ENCODE measurements at regions of chr9 and their contacts with region 1.

Region 1: GRCh38 chr9:4297151-4297785 is 2.6 kb downstream of the GLIS3 start:
- DNase-seq: peak; percentile 78
- H3K4me3 ChIP-seq: peak overlapping the region; percentile 53 to 77 (median 75)
- H3K27ac ChIP-seq: peak overlapping the region; percentile 85
- H3K4me1 ChIP-seq: peaks cover 35% of the 10 kb centered on the region
- H3K27me3 ChIP-seq: no peaks in the 10 kb centered on the region
- CTCF ChIP-seq: peak in 1 of 2 donors; percentile 62
- POLR2A ChIP-seq: no peak

Region 2: GRCh38 chr9:3732077-3733038 is 564.9 kb before region 1 on chr9:
- CTCF ChIA-PET with region 1: interaction called, 4 read pairs
- POLR2A ChIA-PET with region 1: no interaction called
- dilution Hi-C with region 1: no loop called
- intact Hi-C with region 1: loop called (anchors 5 kb)
- DNase-seq: peak; percentile 88
- H3K4me3 ChIP-seq: no peak overlapping the region
- H3K27ac ChIP-seq: no peak overlapping the region
- H3K4me1 ChIP-seq: no peaks in the 10 kb centered on the region
- H3K27me3 ChIP-seq: peaks cover 0 to 2% of the 10 kb centered on the region in 2 experiments
- CTCF ChIP-seq: peak; percentile 58 to 66
- POLR2A ChIP-seq: no peak

Region 3: GRCh38 chr9:4077499-4078102 is 219.7 kb before region 1 on chr9:
- CTCF ChIA-PET with region 1: interaction called, 11 read pairs
- POLR2A ChIA-PET with region 1: no interaction called
- dilution Hi-C with region 1: no loop called
- intact Hi-C with region 1: loop called (anchors 1 kb)
- DNase-seq: peak; percentile 76
- H3K4me3 ChIP-seq: no peak overlapping the region
- H3K27ac ChIP-seq: no peak overlapping the region
- H3K4me1 ChIP-seq: peaks cover 2% of the 10 kb centered on the region
- H3K27me3 ChIP-seq: no peaks in the 10 kb centered on the region
- CTCF ChIP-seq: peak; percentile 83 to 85
- POLR2A ChIP-seq: no peak

Region 4: GRCh38 chr9:4262735-4263141 is 34.5 kb before region 1 on chr9:
- CTCF ChIA-PET with region 1: no interaction called
- POLR2A ChIA-PET with region 1: no interaction called
- dilution Hi-C with region 1: no loop called
- intact Hi-C with region 1: loop called (anchors 1 kb)
- DNase-seq: peak; percentile 74
- H3K4me3 ChIP-seq: no peak overlapping the region
- H3K27ac ChIP-seq: peak overlapping the region; percentile 82
- H3K4me1 ChIP-seq: peaks cover 12% of the 10 kb centered on the region
- H3K27me3 ChIP-seq: no peaks in the 10 kb centered on the region
- CTCF ChIP-seq: no peak
- POLR2A ChIP-seq: no peak

Region 5: DNA sequence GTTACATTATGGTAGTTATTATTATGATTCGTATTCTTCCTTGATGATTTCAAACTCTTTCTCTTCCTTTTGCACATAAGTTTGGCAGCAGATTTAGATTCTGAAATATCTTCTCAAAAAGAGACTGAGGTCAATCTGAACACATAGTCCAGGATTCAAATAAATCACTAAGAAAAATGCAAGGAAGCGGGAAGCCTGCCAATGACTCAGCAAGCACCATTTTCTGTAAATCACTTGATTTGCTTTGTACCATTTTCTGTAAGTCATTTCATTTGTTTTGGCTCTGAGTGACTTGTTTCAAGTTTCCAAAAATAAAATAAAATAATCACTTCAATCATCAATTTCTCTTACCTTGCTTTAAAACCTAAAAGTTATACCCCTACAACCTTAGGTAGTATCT is 27.2 kb after region 1 on chr9:
- CTCF ChIA-PET with region 1: no interaction called
- POLR2A ChIA-PET with region 1: no interaction called
- dilution Hi-C with region 1: no loop called
- intact Hi-C with region 1: no loop called
- DNase-seq: peak; percentile 95
- H3K4me3 ChIP-seq: no peak overlapping the region
- H3K27ac ChIP-seq: peak overlapping the region; percentile 43
- H3K4me1 ChIP-seq: peaks cover 13% of the 10 kb centered on the region
- H3K27me3 ChIP-seq: no peaks in the 10 kb centered on the region
- CTCF ChIP-seq: no peak
- POLR2A ChIP-seq: no peak

Region 6: GRCh38 chr9:4339357-4339756 is 42.1 kb after region 1 on chr9:
- CTCF ChIA-PET with region 1: interaction called, 47 read pairs
- POLR2A ChIA-PET with region 1: no interaction called
- dilution Hi-C with region 1: no loop called
- intact Hi-C with region 1: loop called (anchors 2 kb)
- DNase-seq: peak; percentile 86
- H3K4me3 ChIP-seq: no peak overlapping the region
- H3K27ac ChIP-seq: no peak overlapping the region
- H3K4me1 ChIP-seq: peaks cover 6% of the 10 kb centered on the region
- H3K27me3 ChIP-seq: no peaks in the 10 kb centered on the region
- CTCF ChIP-seq: peak; percentile 85 to 97
- POLR2A ChIP-seq: no peak

Region 7: DNA sequence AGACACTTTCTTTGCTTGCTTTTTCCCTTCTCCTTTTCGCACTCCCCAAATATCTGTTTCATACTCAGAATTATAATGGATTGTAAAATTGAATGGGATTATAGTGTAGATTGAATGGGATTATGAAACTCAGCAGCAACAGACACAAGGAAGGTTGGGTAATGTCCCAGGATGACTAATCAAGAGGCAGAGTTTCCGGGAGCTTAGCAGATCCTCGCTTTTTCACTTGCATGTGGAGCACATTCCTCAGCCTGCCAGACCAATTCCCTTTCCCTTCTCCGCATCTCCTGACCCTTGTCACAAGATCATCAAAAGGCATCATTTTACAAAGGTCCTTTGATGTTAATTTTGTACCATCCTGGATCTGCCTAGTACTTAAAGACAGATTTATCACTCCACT is 137.9 kb after region 1 on chr9:
- CTCF ChIA-PET with region 1: no interaction called
- POLR2A ChIA-PET with region 1: no interaction called
- dilution Hi-C with region 1: no loop called
- intact Hi-C with region 1: no loop called
- DNase-seq: no peak
- H3K4me3 ChIP-seq: no peak overlapping the region
- H3K27ac ChIP-seq: no peak overlapping the region
- H3K4me1 ChIP-seq: peaks cover 11% of the 10 kb centered on the region
- H3K27me3 ChIP-seq: no peaks in the 10 kb centered on the region
- CTCF ChIP-seq: no peak
- POLR2A ChIP-seq: no peak